ENCODE measurements at regions of chr2 and their contacts with region 1.

Region 1: DNA sequence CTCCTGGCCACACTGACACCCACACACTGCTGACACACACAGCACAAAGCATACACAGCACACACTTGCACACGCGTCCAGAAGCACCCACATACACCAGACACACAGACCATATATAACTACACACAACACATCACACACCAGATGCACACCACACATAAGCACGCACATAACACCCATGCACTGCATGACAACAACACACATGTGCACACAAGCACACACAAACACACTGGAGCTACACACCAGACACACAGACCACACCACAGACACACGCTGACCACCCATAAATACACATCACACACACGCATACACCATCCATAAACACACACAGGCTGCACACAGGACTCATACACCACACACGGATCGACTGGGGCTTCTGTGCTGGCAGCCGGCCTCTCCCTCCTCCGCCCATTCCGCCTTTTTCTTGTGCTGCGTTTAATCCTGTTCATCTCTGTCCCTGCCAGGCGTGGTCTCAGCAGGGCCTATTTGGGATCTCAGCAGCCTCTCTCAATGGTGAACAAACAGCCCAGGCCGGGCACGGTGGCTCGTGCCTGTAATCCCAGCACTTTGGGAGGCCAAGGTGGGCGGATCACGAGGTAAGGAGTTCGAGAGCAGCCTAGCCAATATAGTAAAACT is 396.9 kb upstream of the MYT1L start:
- DNase-seq: no peak
- H3K4me3 ChIP-seq: no peak overlapping the region
- H3K27ac ChIP-seq: no peak overlapping the region
- H3K4me1 ChIP-seq: no peaks in the 10 kb centered on the region
- H3K27me3 ChIP-seq: no peaks in the 10 kb centered on the region
- CTCF ChIP-seq: no peak

Region 2: DNA sequence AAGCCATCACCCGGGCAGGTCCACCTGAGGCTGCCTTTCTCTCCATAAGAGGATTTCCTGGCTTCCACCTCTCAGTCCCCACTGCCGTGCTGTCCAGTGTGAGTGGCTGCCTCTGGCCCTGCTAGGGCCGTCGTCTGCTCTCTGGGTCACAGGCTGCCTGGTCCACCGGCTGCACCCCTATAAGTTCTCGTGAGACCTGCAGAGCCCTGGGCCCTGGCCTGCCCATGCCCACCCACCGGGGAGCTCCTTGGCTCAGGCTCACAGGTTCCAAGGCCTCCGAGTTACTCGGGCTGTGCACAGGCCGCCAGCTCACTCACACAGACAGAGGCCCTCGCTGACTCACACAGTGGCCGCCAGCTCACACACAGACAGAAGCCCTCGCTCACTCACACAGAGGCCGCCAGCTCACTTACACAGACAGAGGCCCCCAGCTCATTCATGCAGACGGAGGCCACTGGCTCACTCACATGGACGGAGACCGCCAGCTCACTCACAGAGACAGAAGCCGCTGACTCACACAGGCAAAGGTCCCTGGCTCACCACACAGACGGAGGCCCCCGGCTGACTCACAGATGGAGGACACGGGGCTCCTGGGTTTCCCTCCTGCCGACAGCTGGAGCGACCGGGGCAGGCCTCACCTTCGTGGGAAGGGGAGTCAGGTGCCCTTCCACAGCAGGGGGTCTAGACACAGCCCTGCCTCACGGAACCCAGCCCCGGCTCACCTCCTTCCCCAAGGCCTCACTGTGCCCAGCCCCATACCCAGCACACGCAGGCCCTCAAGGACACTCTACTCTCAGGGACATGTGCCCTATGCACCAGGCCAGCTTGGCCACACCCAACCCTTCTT is 62.8 kb before region 1 on chr2:
- CTCF ChIA-PET with region 1: no interaction called
- dilution Hi-C with region 1: loop called (anchors 5 kb)
- in situ Hi-C with region 1: no loop called
- intact Hi-C with region 1: no loop called
- DNase-seq: no peak
- H3K4me3 ChIP-seq: no peak overlapping the region
- H3K27ac ChIP-seq: no peak overlapping the region
- H3K4me1 ChIP-seq: no peaks in the 10 kb centered on the region
- H3K27me3 ChIP-seq: no peaks in the 10 kb centered on the region
- CTCF ChIP-seq: no peak

Region 3: GRCh38 chr2:2787301-2787907 is 59.4 kb after region 1 on chr2:
- CTCF ChIA-PET with region 1: no interaction called
- dilution Hi-C with region 1: loop called (anchors 5 kb)
- in situ Hi-C with region 1: no loop called
- intact Hi-C with region 1: no loop called
- DNase-seq: no peak
- H3K4me3 ChIP-seq: no peak overlapping the region
- H3K27ac ChIP-seq: no peak overlapping the region
- H3K4me1 ChIP-seq: no peaks in the 10 kb centered on the region
- H3K27me3 ChIP-seq: no peaks in the 10 kb centered on the region
- CTCF ChIP-seq: no peak